Posterior vena cava (tissue), 2 donors: ENCODE measurements at regions of chr7 and their contacts with region 1.

Region 1: DNA sequence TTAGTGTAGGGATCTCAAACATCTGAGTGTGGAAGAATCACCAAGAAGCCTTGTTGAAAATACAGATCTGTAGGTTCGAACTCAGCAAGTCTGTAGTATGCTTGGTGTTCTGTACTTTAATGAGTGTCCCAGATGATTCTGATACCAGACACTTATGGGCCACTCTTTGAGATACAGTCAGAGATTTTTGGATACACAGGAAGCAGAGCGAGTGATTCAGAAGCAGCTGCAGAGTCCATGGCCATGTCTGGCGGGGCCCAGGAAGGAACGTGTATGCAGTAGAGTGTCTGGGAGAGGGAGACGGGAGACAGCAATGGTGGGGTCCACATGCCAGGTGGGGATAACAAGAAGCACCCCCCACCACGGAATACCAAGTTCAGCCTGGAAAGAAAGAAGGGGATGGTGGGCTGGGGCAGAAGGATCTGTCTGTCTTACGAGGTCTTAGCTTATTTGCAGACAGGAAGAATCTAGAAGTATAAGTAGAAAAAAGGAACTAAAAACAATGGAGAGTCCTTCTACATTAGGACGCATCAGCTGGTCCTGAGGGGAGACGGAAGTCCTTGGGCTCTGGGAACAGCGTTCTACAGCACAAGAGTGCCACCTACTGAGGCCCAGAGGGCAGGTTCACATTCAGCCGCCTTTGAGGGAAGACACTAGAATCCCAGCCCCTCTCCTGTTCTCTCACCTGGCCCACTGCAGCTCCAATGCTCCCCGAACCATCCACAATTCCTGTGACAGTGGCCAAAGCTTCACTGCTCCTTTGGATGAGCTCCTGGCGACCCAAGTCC is 55.4 kb downstream of the SLC37A3 start:
- DNase-seq: no peak

Region 2: DNA sequence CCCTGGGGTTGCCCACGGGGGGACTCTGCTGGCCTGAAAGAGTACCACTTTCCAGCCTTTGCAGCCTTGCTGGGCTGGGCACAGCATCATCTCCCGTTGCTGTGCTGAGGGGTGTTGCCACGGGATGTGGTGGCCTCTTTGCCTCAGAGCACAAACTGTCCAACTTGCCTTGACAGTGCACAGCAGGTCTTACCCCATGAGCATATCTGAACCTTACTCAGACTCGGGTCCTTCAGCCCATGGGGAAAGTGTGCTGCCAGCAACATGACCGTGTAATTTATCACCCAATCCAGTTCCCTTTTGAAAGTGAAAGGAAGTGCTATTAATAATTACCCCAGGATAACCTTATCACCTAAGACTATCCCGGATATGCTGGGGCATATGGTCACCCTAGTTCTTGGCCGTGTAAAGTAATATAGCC is 467.1 kb before region 1 on chr7:
- intact Hi-C with region 1: loop called in 1 of 2 experiments (anchors 5 kb)
- DNase-seq: peak; percentile 60

Region 3: DNA sequence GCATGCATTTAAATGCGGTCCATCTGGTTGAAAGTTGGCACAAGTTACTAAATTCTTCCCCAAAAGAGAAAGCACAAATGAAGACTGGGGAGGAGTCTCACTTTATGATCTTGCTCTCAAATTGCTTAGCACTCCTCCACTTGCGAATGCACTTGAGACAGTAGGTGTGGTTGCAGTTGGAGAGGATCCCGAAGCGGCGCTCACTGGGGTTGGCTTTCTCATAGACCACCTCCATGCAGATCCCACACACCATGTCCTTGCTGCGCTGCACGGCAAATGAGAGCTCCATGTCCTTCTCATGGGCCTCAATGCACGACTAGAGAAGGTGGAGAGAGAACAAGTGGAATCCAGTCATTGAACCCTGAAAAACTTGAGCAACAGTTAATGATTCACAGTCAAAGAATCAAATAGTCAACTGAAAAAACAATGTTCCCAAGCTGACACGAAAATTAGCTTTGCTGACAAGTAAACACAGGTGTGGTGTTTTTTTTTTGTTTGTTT is 113.7 kb after region 1 on chr7:
- intact Hi-C with region 1: no loop called
- DNase-seq: no peak